ENCODE measurements at regions of chr11 and their contacts with region 1.

Region 1: DNA sequence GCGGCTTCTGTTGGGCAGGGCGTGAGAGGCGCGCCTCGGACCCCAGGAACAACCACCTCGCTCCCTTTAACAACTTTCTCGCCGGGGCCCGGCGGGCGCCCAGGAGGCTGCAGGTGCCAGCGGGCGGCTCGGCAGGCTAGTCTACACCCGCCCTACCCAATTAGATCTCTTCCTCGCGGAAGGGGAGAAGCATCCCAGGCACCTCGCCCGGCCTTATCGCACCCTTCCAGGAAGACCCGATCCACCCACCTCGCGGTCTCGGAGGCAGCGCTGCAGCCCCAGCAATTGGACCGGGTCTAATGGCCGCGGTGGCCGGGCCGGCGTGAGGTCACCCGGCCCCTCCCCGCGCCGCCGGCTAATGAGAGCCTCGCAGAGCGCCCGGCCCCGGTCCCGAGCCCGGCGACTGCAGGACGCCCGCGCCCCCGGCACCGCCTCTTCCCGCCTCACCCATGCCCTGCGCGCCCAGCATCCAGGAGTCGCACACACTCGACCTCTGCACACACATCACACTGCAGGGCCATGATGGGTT is at the start of gene PLAAT3:
- DNase-seq: no peak
- H3K4me3 ChIP-seq: peak within 1 kb of the TSS; percentile 70 to 87 (median 80)
- H3K27ac ChIP-seq: peak within 1 kb of the TSS; percentile 83 to 92 (median 90)
- H3K4me1 ChIP-seq: peaks cover 37 to 45% (median 43%) of the 10 kb centered on the region in 4 donors
- H3K27me3 ChIP-seq: no peaks in the 10 kb centered on the region
- CTCF ChIP-seq: no peak
- EP300 ChIP-seq: no peak
- POLR2A ChIP-seq: peak; percentile 51
- total RNA-seq, gene PLAAT3: 40.3 to 74.8 (median 54.4) TPM

Region 2: GRCh38 chr11:63573881-63574855 is 40.0 kb before region 1 on chr11:
- intact Hi-C with region 1: loop called (anchors 5 kb)
- DNase-seq: no peak
- H3K4me3 ChIP-seq: peak overlapping the region; percentile 29 to 47 (median 43)
- H3K27ac ChIP-seq: peak overlapping the region; percentile 62 to 83 (median 70)
- H3K4me1 ChIP-seq: peaks cover 25 to 28% (median 26%) of the 10 kb centered on the region in 4 donors
- H3K27me3 ChIP-seq: no peaks in the 10 kb centered on the region
- CTCF ChIP-seq: no peak
- EP300 ChIP-seq: no peak
- POLR2A ChIP-seq: no peak

Region 3: DNA sequence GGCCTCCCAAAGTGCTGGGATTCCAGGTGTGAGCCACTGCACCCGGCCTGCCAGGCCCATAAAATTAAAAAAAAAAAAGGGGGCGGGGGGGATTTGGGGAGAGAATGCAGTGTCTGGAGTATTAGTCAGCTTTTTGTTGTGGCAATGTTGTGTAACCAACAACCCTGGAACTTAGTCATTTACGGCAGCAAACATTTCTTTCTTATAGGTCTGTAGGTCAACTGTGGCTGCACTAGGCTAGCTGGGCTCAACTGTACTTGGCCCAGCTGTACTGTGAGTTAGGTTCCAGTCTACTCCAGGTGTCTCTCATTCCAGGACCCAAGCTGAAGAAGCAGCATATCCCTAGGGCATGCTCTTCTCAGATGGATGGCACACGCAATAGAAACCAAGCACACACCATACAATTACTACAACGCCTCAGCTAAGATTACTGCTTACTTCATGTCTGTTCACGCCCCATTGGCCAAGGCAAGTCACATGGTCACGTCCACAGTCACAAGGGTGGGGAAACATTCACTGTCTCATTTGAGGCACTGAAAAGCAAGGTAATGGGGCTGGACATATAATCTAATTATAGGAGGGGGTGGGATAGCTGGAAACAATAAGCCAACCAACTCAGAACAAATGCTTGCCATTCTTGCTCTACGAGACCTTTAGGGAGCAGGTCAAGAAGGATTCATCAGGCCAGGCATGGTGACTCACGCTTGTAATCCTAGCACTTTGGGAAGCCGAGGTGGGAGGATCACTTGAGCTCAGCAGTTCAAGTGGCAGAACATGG is 188.6 kb after region 1 on chr11:
- intact Hi-C with region 1: no loop called
- DNase-seq: no peak
- H3K4me3 ChIP-seq: no peak overlapping the region
- H3K27ac ChIP-seq: no peak overlapping the region
- H3K4me1 ChIP-seq: no peaks in the 10 kb centered on the region
- H3K27me3 ChIP-seq: no peaks in the 10 kb centered on the region
- CTCF ChIP-seq: no peak
- EP300 ChIP-seq: no peak
- POLR2A ChIP-seq: no peak